ENCODE measurements at regions of chr3 and their contacts with region 1.

Region 1: DNA sequence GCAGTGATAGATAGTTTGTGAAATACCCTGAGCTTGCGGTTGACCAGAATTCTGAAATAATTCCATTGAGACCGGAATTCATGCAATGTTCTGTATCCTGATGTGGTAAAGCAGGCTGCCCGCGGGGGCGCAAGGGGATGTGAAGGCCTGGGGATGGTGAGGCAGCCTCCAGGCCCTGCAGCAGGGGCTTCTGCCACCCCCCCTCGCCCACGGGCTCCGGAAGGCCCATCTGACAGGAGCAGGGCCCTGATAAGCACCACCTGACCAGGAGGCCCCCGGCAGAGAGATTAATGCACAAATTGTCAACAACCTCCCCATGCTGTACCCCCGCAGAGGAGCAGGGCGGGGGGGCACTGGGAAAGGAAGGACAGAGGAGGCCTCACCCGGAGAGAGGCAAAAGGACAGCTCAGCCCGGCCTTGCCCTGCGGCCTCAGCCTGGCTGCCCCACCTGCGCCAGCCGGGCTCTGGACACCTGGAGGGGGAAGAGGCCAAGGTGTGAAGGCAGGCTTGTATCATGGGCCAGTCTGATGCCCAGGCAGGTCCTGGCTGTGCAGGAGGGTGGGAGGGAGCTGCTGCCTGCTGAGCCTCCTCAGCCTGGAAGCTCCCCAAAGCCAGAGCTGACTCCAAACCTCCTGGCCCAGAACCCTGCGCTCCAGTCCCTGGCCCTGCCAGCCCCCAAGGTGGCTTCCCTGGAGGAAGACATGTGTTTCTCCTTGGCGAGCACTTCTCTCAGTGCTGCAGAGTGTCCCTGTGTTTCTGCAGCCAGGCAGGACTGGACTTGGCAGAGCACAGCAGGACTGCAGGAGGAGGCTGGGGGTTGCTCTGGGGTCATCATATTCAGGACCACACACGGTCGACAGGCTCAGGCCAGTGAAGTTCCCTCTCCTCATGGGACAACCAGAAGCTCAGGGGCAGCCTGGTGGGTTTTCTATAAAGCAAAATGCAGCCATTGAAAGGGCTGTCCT is 46.5 kb downstream of the RPN1 start:
- DNase-seq: no peak
- H3K4me3 ChIP-seq: no peak overlapping the region
- H3K27ac ChIP-seq: no peak overlapping the region
- H3K4me1 ChIP-seq: peaks cover 6 to 7% of the 10 kb centered on the region in 2 donors
- H3K27me3 ChIP-seq: no peaks in the 10 kb centered on the region
- CTCF ChIP-seq: no peak
- POLR2A ChIP-seq: no peak

Region 2: DNA sequence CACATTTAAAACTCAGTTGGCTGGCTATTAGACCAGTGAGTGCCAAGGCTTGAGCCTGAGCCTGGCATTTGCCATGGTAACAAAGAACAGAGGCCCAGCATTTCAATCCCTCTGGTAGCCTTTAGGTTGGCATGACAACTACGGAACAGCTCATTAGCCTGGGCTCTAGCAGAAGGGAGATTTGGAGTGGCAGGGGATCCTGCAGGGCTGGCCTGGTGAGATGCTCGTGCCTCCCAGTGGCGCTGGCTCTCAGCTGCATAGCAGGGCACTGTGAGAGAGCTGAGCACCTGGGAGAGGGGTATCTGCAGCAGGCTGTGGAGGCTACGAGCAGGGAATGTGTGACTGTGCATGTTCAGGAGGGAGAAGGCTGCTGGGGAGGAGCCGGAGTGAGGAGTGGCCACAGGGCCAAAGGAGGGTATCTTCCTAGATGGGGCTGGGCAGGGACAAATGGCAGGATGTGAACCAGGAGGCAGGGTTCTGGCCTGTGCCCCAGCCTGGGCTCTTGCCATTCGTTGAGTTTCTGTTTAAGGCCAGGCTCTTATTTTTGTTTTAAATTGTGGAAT is 936.9 kb before region 1 on chr3:
- intact Hi-C with region 1: no loop called
- DNase-seq: no peak
- H3K4me3 ChIP-seq: no peak overlapping the region
- H3K27ac ChIP-seq: no peak overlapping the region
- H3K4me1 ChIP-seq: peaks cover 7% of the 10 kb centered on the region in 2 donors
- H3K27me3 ChIP-seq: no peaks in the 10 kb centered on the region
- CTCF ChIP-seq: no peak
- POLR2A ChIP-seq: no peak

Region 3: GRCh38 chr3:128075516-128076482 is 528.3 kb before region 1 on chr3:
- intact Hi-C with region 1: loop called (anchors 5 kb)
- DNase-seq: peak; percentile 80 to 87
- H3K4me3 ChIP-seq: peak overlapping the region in 2 of 3 donors; percentile 39 to 46
- H3K27ac ChIP-seq: no peak overlapping the region
- H3K4me1 ChIP-seq: peaks cover 8 to 29% of the 10 kb centered on the region in 2 donors
- H3K27me3 ChIP-seq: no peaks in the 10 kb centered on the region
- CTCF ChIP-seq: peak; percentile 58 to 96 (median 86)
- POLR2A ChIP-seq: peak in 1 of 2 donors; percentile 16

Region 4: DNA sequence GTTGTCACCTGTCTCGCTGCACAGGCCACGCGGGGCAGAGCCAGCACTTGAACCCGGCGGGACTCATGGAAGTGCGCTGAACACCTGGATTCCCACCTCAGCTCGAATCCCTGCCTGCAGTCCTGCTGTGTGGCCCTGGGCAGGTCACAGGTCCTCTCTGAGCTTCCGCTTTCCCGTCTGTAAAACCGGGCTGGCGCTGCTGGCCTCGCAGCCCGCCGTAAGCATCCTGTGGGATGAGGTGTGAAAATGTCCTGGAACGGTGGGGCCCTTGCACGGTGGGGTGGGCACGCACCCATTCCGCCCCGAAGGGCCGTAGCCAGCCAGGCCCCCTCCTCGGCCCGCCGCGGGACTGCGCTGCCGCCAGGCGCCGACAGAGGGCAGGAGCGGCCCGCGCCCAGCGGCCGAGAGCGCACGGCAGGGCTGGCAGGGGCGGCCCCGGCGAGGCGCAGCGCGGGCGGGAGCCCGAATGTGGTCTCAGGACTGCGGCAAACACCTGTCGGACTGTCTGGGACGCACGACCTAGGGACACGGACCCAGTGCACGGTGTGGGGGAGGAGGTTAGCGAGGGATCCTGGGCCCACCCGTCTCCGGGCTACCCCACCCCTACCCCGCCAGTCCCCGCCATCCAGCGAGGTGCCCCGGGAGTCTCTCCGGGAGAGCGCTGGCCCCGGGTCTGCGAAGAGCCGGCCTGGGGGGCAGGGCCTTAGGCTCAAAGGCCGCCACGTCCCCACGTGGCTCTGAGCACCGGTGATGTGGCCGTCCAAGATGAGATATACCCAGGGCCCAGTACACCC is 177.8 kb before region 1 on chr3:
- intact Hi-C with region 1: loop called (anchors 10 kb)
- DNase-seq: peak; percentile 45 to 48
- H3K4me3 ChIP-seq: no peak overlapping the region
- H3K27ac ChIP-seq: no peak overlapping the region
- H3K4me1 ChIP-seq: peaks cover 3 to 7% of the 10 kb centered on the region in 2 donors
- H3K27me3 ChIP-seq: no peaks in the 10 kb centered on the region
- CTCF ChIP-seq: peak; percentile 27 to 99 (median 86)
- POLR2A ChIP-seq: no peak

Region 5: DNA sequence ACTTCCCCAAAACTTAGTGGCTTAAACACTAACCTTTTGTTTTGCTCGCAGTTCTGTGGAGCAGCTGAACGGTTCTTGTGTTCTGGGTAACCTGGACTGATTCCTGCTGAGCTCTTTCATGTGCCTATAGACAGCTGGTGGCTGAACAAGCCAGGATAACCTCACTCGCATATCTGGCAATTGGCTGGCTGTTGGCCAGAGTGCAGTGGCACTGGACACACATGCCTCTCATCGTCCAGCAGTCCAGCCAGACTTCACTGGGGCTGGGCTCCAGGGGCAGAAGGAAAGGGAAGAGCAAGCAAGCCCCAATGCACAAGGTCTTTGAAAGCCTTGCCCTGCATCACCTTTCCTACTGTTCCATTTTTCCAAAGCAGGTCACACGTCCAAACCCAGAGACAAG is 57.4 kb before region 1 on chr3:
- intact Hi-C with region 1: no loop called
- DNase-seq: no peak
- H3K4me3 ChIP-seq: no peak overlapping the region
- H3K27ac ChIP-seq: no peak overlapping the region
- H3K4me1 ChIP-seq: peaks cover 0 to 19% of the 10 kb centered on the region in 2 donors
- H3K27me3 ChIP-seq: no peaks in the 10 kb centered on the region
- CTCF ChIP-seq: no peak
- POLR2A ChIP-seq: no peak

Region 6: DNA sequence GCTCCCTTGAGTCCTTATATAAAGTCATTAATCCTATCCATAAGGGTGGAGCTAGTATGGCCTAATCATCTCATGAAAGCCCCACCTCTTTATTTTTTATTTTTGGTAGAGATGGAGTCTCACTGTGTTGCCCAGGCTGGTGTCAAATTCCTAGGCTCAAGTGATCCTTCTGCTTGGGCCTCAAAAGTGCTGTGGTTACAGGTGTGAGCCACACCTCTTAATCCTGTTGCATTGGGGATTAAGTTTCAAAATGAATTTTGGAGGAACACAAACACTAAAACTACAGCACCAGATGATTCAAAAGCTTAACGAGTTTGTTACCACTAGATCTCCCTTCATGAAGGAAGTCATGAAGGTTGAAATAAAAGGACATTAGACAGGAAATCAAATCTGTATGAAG is 149.6 kb after region 1 on chr3:
- intact Hi-C with region 1: no loop called
- DNase-seq: no peak
- H3K4me3 ChIP-seq: no peak overlapping the region
- H3K27ac ChIP-seq: no peak overlapping the region
- H3K4me1 ChIP-seq: peaks cover 12 to 23% of the 10 kb centered on the region in 2 donors
- H3K27me3 ChIP-seq: no peaks in the 10 kb centered on the region
- CTCF ChIP-seq: no peak
- POLR2A ChIP-seq: no peak

Measured in thyroid gland (tissue), 4 donors.